Mammary epithelial cell (primary cell): ENCODE measurements at regions of chr11 and their contacts with region 1.

Region 1: GRCh38 chr11:47552566-47553416 is at the start of gene CELF1:
- DNase-seq: peak; percentile 88
- H3K4me3 ChIP-seq: peak within 1 kb of the TSS; percentile 74 to 93 (median 91)
- H3K27ac ChIP-seq: peak within 1 kb of the TSS; percentile 79
- H3K4me1 ChIP-seq: peaks cover 18% of the 10 kb centered on the region
- H3K27me3 ChIP-seq: no peaks in the 10 kb centered on the region
- CTCF ChIP-seq: peak; percentile 56 to 70
- total RNA-seq, gene CELF1: 113 to 129 TPM

Region 2: GRCh38 chr11:47213985-47214564 is 338.7 kb before region 1 on chr11:
- CTCF ChIA-PET with region 1: no interaction called
- dilution Hi-C with region 1: no loop called
- in situ Hi-C with region 1: no loop called
- intact Hi-C with region 1: no loop called
- DNase-seq: peak; percentile 89
- H3K4me3 ChIP-seq: peak overlapping the region; percentile 8 to 47 (median 38)
- H3K27ac ChIP-seq: peak overlapping the region; percentile 73
- H3K4me1 ChIP-seq: peaks cover 16% of the 10 kb centered on the region
- H3K27me3 ChIP-seq: no peaks in the 10 kb centered on the region
- CTCF ChIP-seq: no peak

Region 3: GRCh38 chr11:47477323-47477722 is 75.5 kb before region 1 on chr11:
- CTCF ChIA-PET with region 1: no interaction called
- dilution Hi-C with region 1: no loop called
- in situ Hi-C with region 1: no loop called
- intact Hi-C with region 1: loop called (anchors 1 kb)
- DNase-seq: peak; percentile 91
- H3K4me3 ChIP-seq: no peak overlapping the region
- H3K27ac ChIP-seq: peak overlapping the region; percentile 62
- H3K4me1 ChIP-seq: peaks cover 26% of the 10 kb centered on the region
- H3K27me3 ChIP-seq: no peaks in the 10 kb centered on the region
- CTCF ChIP-seq: no peak

Region 4: GRCh38 chr11:47514825-47515647 is 37.8 kb before region 1 on chr11:
- CTCF ChIA-PET with region 1: no interaction called
- dilution Hi-C with region 1: no loop called
- in situ Hi-C with region 1: no loop called
- intact Hi-C with region 1: loop called (anchors 5 kb)
- DNase-seq: peak; percentile 65
- H3K4me3 ChIP-seq: no peak overlapping the region
- H3K27ac ChIP-seq: peak overlapping the region; percentile 15
- H3K4me1 ChIP-seq: peaks cover 9% of the 10 kb centered on the region
- H3K27me3 ChIP-seq: no peaks in the 10 kb centered on the region
- CTCF ChIP-seq: no peak

Region 5: GRCh38 chr11:47523468-47524225 is 29.1 kb before region 1 on chr11:
- CTCF ChIA-PET with region 1: no interaction called
- dilution Hi-C with region 1: no loop called
- in situ Hi-C with region 1: no loop called
- intact Hi-C with region 1: loop called (anchors 2 kb)
- DNase-seq: peak; percentile 84
- H3K4me3 ChIP-seq: peak overlapping the region in 1 of 3 experiments; percentile 2
- H3K27ac ChIP-seq: peak overlapping the region; percentile 74
- H3K4me1 ChIP-seq: peaks cover 30% of the 10 kb centered on the region
- H3K27me3 ChIP-seq: no peaks in the 10 kb centered on the region
- CTCF ChIP-seq: no peak

Region 6: DNA sequence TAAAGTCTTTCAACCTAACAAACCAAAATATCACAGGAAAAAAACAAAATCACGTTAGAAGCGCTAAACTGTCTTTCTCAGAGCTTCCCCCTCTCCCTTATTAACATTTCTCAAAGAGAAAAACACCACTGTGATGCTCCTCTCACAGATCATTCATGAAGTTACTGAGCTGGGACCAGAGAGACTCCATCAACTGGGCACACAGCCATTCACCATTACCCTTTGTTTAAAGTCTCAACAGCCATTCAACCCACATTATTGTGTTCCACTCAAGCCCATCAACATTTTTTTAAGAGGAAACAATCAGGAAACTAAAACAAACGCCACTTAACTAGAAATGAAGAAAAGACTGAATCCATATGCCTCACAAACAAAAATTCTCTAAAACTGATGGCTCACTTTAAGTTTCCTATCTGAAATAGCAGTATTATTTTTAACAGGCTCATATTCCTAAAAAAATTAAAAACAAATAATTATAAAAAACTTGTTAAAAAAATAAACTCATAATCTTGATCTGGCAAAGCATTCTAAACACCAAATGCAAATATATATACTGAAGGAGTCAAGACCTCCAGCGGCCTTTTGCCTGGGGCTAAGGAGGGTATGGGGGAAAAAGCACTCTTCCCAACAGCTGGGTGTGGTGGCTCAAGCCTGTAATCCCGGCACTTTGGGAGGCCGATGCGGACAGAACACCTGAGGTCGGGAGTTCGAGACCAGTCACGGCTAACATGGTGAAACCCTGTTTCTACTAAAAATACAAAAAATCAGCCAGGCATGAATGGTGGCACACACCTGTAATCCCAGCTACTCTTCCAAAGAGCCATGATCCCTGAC is 13.8 kb before region 1 on chr11:
- CTCF ChIA-PET with region 1: interaction called, 4 read pairs
- dilution Hi-C with region 1: no loop called
- in situ Hi-C with region 1: no loop called
- intact Hi-C with region 1: loop called (anchors 2 kb)
- DNase-seq: no peak
- H3K4me3 ChIP-seq: no peak overlapping the region
- H3K27ac ChIP-seq: peak overlapping the region; percentile 76
- H3K4me1 ChIP-seq: peaks cover 28% of the 10 kb centered on the region
- H3K27me3 ChIP-seq: no peaks in the 10 kb centered on the region
- CTCF ChIP-seq: no peak

Region 7: GRCh38 chr11:47570651-47571356 is 18.0 kb after region 1 on chr11:
- CTCF ChIA-PET with region 1: interaction called, 10 read pairs
- dilution Hi-C with region 1: no loop called
- in situ Hi-C with region 1: no loop called
- intact Hi-C with region 1: no loop called
- DNase-seq: no peak
- H3K4me3 ChIP-seq: no peak overlapping the region
- H3K27ac ChIP-seq: no peak overlapping the region
- H3K4me1 ChIP-seq: peaks cover 22% of the 10 kb centered on the region
- H3K27me3 ChIP-seq: no peaks in the 10 kb centered on the region
- CTCF ChIP-seq: no peak

Region 8: GRCh38 chr11:47578524-47579460 is 26.0 kb after region 1 on chr11 and contains the starts of genes KBTBD4 and NDUFS3:
- CTCF ChIA-PET with region 1: interaction called, 3 read pairs
- dilution Hi-C with region 1: no loop called
- in situ Hi-C with region 1: no loop called
- intact Hi-C with region 1: loop called (anchors 1 kb)
- DNase-seq: peak; percentile 88
- H3K4me3 ChIP-seq: peak within 1 kb of the TSS; percentile 81 to 97 (median 93)
- H3K27ac ChIP-seq: peak within 1 kb of the TSS; percentile 90
- H3K4me1 ChIP-seq: peaks cover 24% of the 10 kb centered on the region
- H3K27me3 ChIP-seq: no peaks in the 10 kb centered on the region
- CTCF ChIP-seq: no peak
- total RNA-seq, gene KBTBD4: 12.2 to 17.8 TPM
- total RNA-seq, gene NDUFS3: 30.5 to 87.0 TPM

Region 9: GRCh38 chr11:47611348-47611794 is 58.6 kb after region 1 on chr11:
- CTCF ChIA-PET with region 1: no interaction called
- dilution Hi-C with region 1: no loop called
- in situ Hi-C with region 1: no loop called
- intact Hi-C with region 1: no loop called
- DNase-seq: no peak
- H3K4me3 ChIP-seq: no peak overlapping the region
- H3K27ac ChIP-seq: no peak overlapping the region
- H3K4me1 ChIP-seq: no peaks in the 10 kb centered on the region
- H3K27me3 ChIP-seq: no peaks in the 10 kb centered on the region
- CTCF ChIP-seq: no peak